ENCODE measurements at regions of chr7 and their contacts with region 1.

Region 1: GRCh38 chr7:43314379-43315189 is 202.1 kb downstream of the HECW1 start:
- DNase-seq: no peak
- ATAC-seq: peak; percentile 85
- H3K4me3 ChIP-seq: no peak overlapping the region
- H3K27ac ChIP-seq: no peak overlapping the region; the same call in 1 of the 2 replicates
- H3K4me1 ChIP-seq: peaks cover 17% of the 10 kb centered on the region
- H3K27me3 ChIP-seq: no peaks in the 10 kb centered on the region
- CTCF ChIP-seq: peak in 2 of 3 experiments; percentile 11 to 36; a peak in 3 of 6 replicates
- EP300 ChIP-seq: peak; percentile 92 to 96; a peak in 3 of 4 replicates
- POLR2A ChIP-seq: no peak
- RAD21 ChIP-seq: peak; percentile 18; the same call in 1 of the 2 replicates

Region 2: GRCh38 chr7:43244232-43244631 is 70.4 kb before region 1 on chr7:
- CTCF ChIA-PET with region 1: no interaction called
- POLR2A ChIA-PET with region 1: no interaction called
- RAD21 ChIA-PET with region 1: no interaction called
- SMC1A ChIA-PET with region 1: no interaction called
- in situ Hi-C with region 1: no loop called
- intact Hi-C with region 1: no loop called
- DNase-seq: no peak
- ATAC-seq: no peak
- H3K4me3 ChIP-seq: no peak overlapping the region
- H3K27ac ChIP-seq: no peak overlapping the region
- H3K4me1 ChIP-seq: no peaks in the 10 kb centered on the region
- H3K27me3 ChIP-seq: no peaks in the 10 kb centered on the region
- CTCF ChIP-seq: no peak
- EP300 ChIP-seq: no peak
- POLR2A ChIP-seq: no peak
- RAD21 ChIP-seq: no peak

Region 3: GRCh38 chr7:43302211-43302711 is 12.3 kb before region 1 on chr7:
- CTCF ChIA-PET with region 1: interaction called, 56 read pairs
- POLR2A ChIA-PET with region 1: interaction called, 22 read pairs
- RAD21 ChIA-PET with region 1: interaction called, 69 read pairs
- SMC1A ChIA-PET with region 1: interaction called, 57 read pairs
- in situ Hi-C with region 1: no loop called
- intact Hi-C with region 1: no loop called
- DNase-seq: no peak
- ATAC-seq: peak; percentile 63
- H3K4me3 ChIP-seq: no peak overlapping the region
- H3K27ac ChIP-seq: no peak overlapping the region
- H3K4me1 ChIP-seq: peaks cover 8% of the 10 kb centered on the region
- H3K27me3 ChIP-seq: peaks cover 1 to 3% of the 10 kb centered on the region in 2 experiments; a peak in 1 of 4 replicates
- CTCF ChIP-seq: no peak
- EP300 ChIP-seq: no peak
- POLR2A ChIP-seq: no peak
- RAD21 ChIP-seq: no peak

Region 4: DNA sequence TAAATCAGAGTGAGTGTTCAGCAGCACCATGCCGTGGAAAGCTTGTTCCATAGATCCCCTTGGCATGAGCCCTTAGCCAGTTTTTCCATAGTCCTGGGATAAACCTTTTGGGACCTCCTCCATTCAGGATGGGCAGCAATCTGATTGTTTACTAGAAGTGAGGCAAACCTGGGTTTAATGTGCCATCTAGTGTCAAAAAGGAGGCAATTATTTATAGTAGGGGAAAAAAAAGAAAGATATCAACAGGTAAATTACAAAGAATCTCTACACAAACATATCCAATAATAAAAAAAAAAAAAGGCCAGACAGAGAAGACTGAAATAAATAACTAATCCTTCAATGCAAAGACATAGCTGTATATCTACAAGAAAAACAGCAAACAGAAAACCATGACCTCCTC is 39.3 kb after region 1 on chr7:
- CTCF ChIA-PET with region 1: no interaction called
- POLR2A ChIA-PET with region 1: interaction called, 4 read pairs
- RAD21 ChIA-PET with region 1: interaction called, 3 read pairs
- SMC1A ChIA-PET with region 1: interaction called, 4 read pairs
- in situ Hi-C with region 1: no loop called
- intact Hi-C with region 1: loop called (anchors 5 kb)
- DNase-seq: no peak
- ATAC-seq: no peak
- H3K4me3 ChIP-seq: no peak overlapping the region
- H3K27ac ChIP-seq: no peak overlapping the region
- H3K4me1 ChIP-seq: no peaks in the 10 kb centered on the region
- H3K27me3 ChIP-seq: no peaks in the 10 kb centered on the region
- CTCF ChIP-seq: no peak; a peak in 1 of 6 replicates
- EP300 ChIP-seq: no peak
- POLR2A ChIP-seq: no peak
- RAD21 ChIP-seq: peak; percentile 27; the same call in 1 of the 2 replicates

Region 5: GRCh38 chr7:43439631-43440401 is 125.2 kb after region 1 on chr7:
- CTCF ChIA-PET with region 1: interaction called, 45 read pairs
- POLR2A ChIA-PET with region 1: interaction called, 5 read pairs
- RAD21 ChIA-PET with region 1: interaction called, 22 read pairs
- SMC1A ChIA-PET with region 1: interaction called, 18 read pairs
- in situ Hi-C with region 1: no loop called
- intact Hi-C with region 1: loop called (anchors 5 kb)
- DNase-seq: peak; percentile 13
- ATAC-seq: peak; percentile 97
- H3K4me3 ChIP-seq: no peak overlapping the region
- H3K27ac ChIP-seq: no peak overlapping the region
- H3K4me1 ChIP-seq: no peaks in the 10 kb centered on the region
- H3K27me3 ChIP-seq: no peaks in the 10 kb centered on the region; a peak in 1 of 4 replicates
- CTCF ChIP-seq: peak; percentile 81 to 92 (median 89)
- EP300 ChIP-seq: no peak
- POLR2A ChIP-seq: no peak
- RAD21 ChIP-seq: peak; percentile 66

Measured in GM12878 (cell line).